Activated CD4-positive, alpha-beta T cell treated with anti-CD3 and anti-CD28 coated beads for 36 hours (primary cell): ENCODE measurements at regions of chr12 and their contacts with region 1.

Region 1: DNA sequence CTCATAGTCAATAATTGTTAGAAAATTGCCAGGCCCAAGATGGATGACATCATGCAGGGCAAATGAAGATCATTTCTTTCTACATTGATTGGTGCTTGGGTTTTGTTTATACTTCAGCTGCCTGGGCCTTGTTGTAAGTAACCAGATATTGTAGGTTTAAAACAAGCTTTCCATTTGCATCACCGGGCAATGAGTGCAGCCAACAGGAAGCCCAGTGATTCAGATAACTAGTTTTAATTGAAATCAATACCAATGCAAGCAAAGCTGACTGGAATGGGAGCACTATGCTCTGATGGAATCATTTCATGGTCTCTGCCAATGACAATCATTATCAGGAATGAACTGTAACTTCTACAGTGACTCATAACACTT is 279.3 kb downstream of the DUSP6 start:
- DNase-seq: peak; percentile 42
- ATAC-seq: peak; percentile 20
- H3K4me3 Mint-ChIP-seq: no peak overlapping the region
- H3K27ac Mint-ChIP-seq: peak overlapping the region; percentile 91
- H3K4me1 Mint-ChIP-seq: peaks cover 44% of the 10 kb centered on the region
- H3K27me3 Mint-ChIP-seq: no peaks in the 10 kb centered on the region

Region 2: GRCh38 chr12:88854260-88854659 is 218.8 kb before region 1 on chr12:
- CTCF ChIA-PET with region 1: no interaction called
- POLR2A ChIA-PET with region 1: no interaction called
- intact Hi-C with region 1: no loop called
- DNase-seq: no peak
- ATAC-seq: no peak
- H3K4me3 Mint-ChIP-seq: no peak overlapping the region
- H3K27ac Mint-ChIP-seq: no peak overlapping the region
- H3K4me1 Mint-ChIP-seq: no peaks in the 10 kb centered on the region
- H3K27me3 Mint-ChIP-seq: peaks cover 2% of the 10 kb centered on the region

Region 3: GRCh38 chr12:89092297-89092696 is 19.3 kb after region 1 on chr12:
- CTCF ChIA-PET with region 1: interaction called, 3 read pairs
- POLR2A ChIA-PET with region 1: interaction called, 4 read pairs
- intact Hi-C with region 1: loop called (anchors 1 kb)
- DNase-seq: peak; percentile 53
- ATAC-seq: peak; percentile 90
- H3K4me3 Mint-ChIP-seq: no peak overlapping the region
- H3K27ac Mint-ChIP-seq: peak overlapping the region; percentile 85
- H3K4me1 Mint-ChIP-seq: peaks cover 27% of the 10 kb centered on the region
- H3K27me3 Mint-ChIP-seq: no peaks in the 10 kb centered on the region

Region 4: GRCh38 chr12:89135976-89136634 is 63.1 kb after region 1 on chr12:
- CTCF ChIA-PET with region 1: no interaction called
- POLR2A ChIA-PET with region 1: no interaction called
- intact Hi-C with region 1: loop called (anchors 2 kb)
- DNase-seq: peak; percentile 10
- ATAC-seq: peak; percentile 60
- H3K4me3 Mint-ChIP-seq: no peak overlapping the region
- H3K27ac Mint-ChIP-seq: no peak overlapping the region
- H3K4me1 Mint-ChIP-seq: peaks cover 30% of the 10 kb centered on the region
- H3K27me3 Mint-ChIP-seq: peaks cover 8% of the 10 kb centered on the region

Region 5: GRCh38 chr12:89244536-89244935 is 171.5 kb after region 1 on chr12:
- CTCF ChIA-PET with region 1: interaction called, 3 read pairs
- POLR2A ChIA-PET with region 1: no interaction called
- intact Hi-C with region 1: loop called in 1 of 2 experiments (anchors 2 kb)
- DNase-seq: peak; percentile 48
- ATAC-seq: peak; percentile 88
- H3K4me3 Mint-ChIP-seq: peak overlapping the region; percentile 27
- H3K27ac Mint-ChIP-seq: peak overlapping the region; percentile 84
- H3K4me1 Mint-ChIP-seq: peaks cover 38% of the 10 kb centered on the region
- H3K27me3 Mint-ChIP-seq: no peaks in the 10 kb centered on the region

Region 6: DNA sequence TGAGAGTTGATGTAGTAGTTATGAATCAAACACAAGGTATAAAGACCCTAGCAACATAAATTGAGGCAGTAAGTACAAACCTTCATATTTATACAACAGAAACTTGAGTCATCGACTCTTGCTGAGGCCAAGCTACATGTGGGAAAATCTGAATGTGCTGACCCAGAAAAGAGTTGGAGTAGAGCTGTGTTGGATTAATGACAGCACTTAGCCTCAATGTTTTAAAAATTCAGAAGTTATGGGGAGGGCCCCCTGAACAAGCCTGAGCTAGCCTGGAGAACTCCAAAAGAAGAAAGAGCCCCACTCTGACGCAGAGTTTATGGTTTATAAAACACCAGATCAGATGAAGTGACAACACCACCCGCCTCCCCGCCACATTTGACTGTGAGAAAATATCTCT is 179.3 kb after region 1 on chr12:
- CTCF ChIA-PET with region 1: no interaction called
- POLR2A ChIA-PET with region 1: no interaction called
- intact Hi-C with region 1: loop called in 1 of 2 experiments (anchors 5 kb)
- DNase-seq: peak; percentile 24
- ATAC-seq: peak; percentile 67
- H3K4me3 Mint-ChIP-seq: no peak overlapping the region
- H3K27ac Mint-ChIP-seq: peak overlapping the region; percentile 76
- H3K4me1 Mint-ChIP-seq: peaks cover 40% of the 10 kb centered on the region
- H3K27me3 Mint-ChIP-seq: no peaks in the 10 kb centered on the region